ENCODE measurements at regions of chr13 and their contacts with region 1.

Region 1: DNA sequence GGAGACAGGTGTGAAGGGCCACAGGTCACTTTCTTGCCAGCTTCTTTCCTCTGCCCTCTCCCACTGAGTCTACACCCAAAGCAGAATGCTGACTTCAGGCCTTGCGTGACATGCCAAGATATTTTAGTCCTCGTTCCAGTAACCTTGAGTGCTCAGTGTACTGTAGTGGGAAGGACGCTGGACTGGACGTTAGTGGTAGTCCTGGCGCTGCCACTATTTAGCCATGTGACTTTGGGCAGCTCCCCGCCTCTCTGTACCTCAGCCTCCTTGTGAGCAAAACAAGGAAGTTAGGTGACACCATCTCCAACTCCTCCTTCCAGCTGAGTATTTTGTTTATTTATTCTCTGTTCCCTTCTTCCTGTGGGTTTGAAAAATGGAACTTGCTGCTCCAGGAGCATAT is 86.1 kb downstream of the FRY start:
- DNase-seq: peak; percentile 71
- ATAC-seq: peak; percentile 97

Region 2: DNA sequence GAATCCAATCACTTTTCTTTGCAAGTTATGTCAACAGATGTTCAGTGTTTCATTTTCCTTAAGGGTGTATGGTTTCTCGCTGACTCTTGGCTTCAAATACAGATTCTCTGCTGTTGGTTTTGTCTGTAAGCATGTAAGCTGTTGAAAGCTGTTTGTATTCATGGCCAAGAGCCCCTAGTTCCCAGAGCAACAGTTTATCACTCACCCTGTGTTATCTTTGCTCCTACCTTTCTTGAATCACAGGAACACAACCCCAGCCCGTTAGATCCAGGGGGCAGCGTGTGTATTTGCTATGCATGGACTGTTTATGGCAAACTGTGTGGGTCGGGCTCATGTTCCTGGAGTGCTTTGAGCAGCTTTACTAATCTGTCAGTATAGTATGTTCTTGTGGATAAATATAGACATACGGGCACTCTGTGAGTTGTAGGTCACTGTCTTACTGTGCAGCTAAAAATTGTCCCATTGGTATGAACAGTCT is 57.3 kb before region 1 on chr13:
- intact Hi-C with region 1: loop called (anchors 5 kb)
- DNase-seq: no peak
- ATAC-seq: peak; percentile 94

Region 3: DNA sequence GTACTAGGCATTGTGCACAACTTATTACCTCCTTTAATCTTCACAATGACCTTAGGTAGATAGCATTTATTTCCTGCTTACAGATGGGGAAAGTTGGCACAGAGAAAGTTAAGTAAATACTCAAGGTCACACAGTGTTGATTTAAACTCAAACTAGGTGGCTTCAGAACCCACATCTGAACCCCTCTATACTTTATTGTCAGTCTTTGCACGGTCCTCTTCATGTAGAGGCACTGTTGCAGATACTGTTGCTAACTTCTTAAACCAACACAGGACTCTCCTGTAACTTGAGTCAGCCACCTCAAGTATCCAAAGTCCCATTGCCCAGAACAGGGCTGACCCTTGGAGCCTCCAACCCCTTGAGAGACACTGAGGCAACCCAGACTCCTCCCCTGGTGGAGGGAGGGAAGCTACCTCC is 37.4 kb before region 1 on chr13:
- intact Hi-C with region 1: loop called (anchors 5 kb)
- DNase-seq: no peak
- ATAC-seq: no peak

Measured in Right ventricle myocardium inferior (tissue), 1 donor.